ENCODE measurements at regions of chr7 and their contacts with region 1.

Region 1: GRCh38 chr7:16071246-16071857 is 350.0 kb downstream of the CRPPA start:
- DNase-seq: peak; percentile 49 to 70 (median 60)
- ATAC-seq: peak; percentile 93
- H3K4me3 ChIP-seq: no peak overlapping the region
- H3K27ac ChIP-seq: no peak overlapping the region
- H3K4me1 ChIP-seq: no peaks in the 10 kb centered on the region
- H3K27me3 ChIP-seq: no peaks in the 10 kb centered on the region
- CTCF ChIP-seq: peak; percentile 72 to 87 (median 85)
- EP300 ChIP-seq: no peak
- POLR2A ChIP-seq: no peak
- RAD21 ChIP-seq: peak; percentile 74 to 82

Region 2: DNA sequence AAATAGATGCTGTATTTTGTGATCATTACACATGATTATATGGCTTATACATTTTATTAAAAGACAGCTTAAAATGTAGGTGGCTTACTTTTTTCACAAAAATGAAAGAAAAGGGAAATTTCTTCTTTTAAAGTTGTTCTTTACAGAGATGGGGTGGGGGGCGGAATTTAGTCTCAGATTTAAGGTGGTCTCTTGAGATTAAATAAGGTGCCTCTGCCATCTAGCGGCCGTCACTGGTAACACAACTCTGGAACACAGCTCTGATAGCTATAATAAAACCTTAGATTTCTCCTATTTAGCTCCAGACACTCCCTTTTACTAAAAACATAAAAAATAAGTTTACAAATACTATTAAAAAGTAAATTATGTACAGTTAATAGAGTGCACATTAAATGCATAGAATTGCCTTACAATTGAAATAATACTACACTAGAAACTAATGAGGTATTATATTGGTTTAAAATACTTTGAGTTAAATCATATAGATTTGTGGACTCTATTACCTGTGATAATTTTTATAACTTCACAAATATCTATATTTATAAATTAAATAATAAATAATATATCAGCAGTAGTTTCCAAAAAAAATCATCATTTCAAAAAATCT is 1379.7 kb before region 1 on chr7:
- CTCF ChIA-PET with region 1: no interaction called
- POLR2A ChIA-PET with region 1: no interaction called
- in situ Hi-C with region 1: no loop called
- intact Hi-C with region 1: loop called (anchors 5 kb)
- DNase-seq: peak; percentile 7 to 57 (median 42)
- ATAC-seq: no peak
- H3K4me3 ChIP-seq: no peak overlapping the region
- H3K27ac ChIP-seq: no peak overlapping the region
- H3K4me1 ChIP-seq: no peaks in the 10 kb centered on the region
- H3K27me3 ChIP-seq: no peaks in the 10 kb centered on the region
- CTCF ChIP-seq: peak; percentile 49 to 74 (median 67)
- EP300 ChIP-seq: no peak
- POLR2A ChIP-seq: no peak
- RAD21 ChIP-seq: peak; percentile 73 to 77

Region 3: DNA sequence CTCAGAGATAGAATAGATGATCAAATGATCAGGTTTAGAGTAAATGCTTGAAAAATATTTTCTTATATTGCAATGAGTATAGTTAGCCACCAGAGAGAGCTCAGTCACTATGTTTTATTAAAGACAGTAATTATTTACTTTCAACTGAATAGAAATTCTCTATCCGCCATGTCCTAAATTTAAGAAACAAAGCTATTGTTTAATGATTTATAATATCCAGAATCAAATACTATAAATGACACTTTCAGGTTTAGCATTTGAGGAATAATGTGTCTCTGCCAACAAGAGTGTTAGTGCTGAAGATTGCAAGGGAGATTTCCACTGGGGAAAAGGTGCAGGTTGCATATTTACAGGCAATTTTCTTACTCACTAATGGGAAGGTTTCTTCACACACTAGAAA is 1353.5 kb before region 1 on chr7:
- CTCF ChIA-PET with region 1: no interaction called
- POLR2A ChIA-PET with region 1: no interaction called
- in situ Hi-C with region 1: loop called (anchors 25 kb)
- intact Hi-C with region 1: no loop called
- DNase-seq: no peak
- ATAC-seq: no peak
- H3K4me3 ChIP-seq: no peak overlapping the region
- H3K27ac ChIP-seq: no peak overlapping the region
- H3K4me1 ChIP-seq: no peaks in the 10 kb centered on the region
- H3K27me3 ChIP-seq: no peaks in the 10 kb centered on the region
- CTCF ChIP-seq: no peak
- EP300 ChIP-seq: no peak
- POLR2A ChIP-seq: no peak
- RAD21 ChIP-seq: peak; percentile 42 to 57; a peak in 3 of 4 replicates

Region 4: DNA sequence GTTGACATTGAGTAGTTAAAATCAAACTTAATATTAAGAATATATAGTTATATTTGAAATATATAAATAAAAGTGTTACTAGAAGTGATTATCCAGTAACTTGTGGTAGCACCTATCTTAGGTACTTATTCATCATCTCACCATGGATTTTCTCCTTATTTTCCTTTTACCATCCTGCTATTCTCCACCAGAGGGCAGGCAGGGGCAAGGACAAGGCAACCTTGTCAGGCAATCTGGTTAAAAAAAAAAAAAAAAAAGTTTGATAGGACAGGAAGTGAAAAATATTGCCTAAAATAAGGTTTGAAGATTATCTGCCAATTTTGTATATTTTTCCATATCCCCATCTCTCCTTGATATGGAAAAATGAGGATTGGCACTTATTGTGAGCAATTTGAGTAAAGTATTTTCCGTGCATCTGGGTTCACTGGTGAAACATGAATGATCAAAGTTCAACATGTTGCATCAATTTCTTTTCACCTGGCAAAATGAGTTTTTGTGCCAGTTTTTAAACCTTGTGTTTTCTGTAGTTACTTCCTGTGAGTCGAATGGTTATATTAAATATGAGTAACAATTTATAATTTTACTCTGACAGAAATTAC is 766.3 kb before region 1 on chr7:
- CTCF ChIA-PET with region 1: interaction called, 6 read pairs
- POLR2A ChIA-PET with region 1: no interaction called
- in situ Hi-C with region 1: loop called (anchors 25 kb)
- intact Hi-C with region 1: loop called (anchors 1 kb)
- DNase-seq: peak; percentile 4 to 34 (median 19)
- ATAC-seq: no peak
- H3K4me3 ChIP-seq: no peak overlapping the region
- H3K27ac ChIP-seq: no peak overlapping the region
- H3K4me1 ChIP-seq: no peaks in the 10 kb centered on the region
- H3K27me3 ChIP-seq: no peaks in the 10 kb centered on the region
- CTCF ChIP-seq: peak in 2 of 3 experiments; percentile 25 to 32; a peak in 2 of 6 replicates
- EP300 ChIP-seq: no peak
- POLR2A ChIP-seq: no peak
- RAD21 ChIP-seq: peak; percentile 37 to 46

Region 5: DNA sequence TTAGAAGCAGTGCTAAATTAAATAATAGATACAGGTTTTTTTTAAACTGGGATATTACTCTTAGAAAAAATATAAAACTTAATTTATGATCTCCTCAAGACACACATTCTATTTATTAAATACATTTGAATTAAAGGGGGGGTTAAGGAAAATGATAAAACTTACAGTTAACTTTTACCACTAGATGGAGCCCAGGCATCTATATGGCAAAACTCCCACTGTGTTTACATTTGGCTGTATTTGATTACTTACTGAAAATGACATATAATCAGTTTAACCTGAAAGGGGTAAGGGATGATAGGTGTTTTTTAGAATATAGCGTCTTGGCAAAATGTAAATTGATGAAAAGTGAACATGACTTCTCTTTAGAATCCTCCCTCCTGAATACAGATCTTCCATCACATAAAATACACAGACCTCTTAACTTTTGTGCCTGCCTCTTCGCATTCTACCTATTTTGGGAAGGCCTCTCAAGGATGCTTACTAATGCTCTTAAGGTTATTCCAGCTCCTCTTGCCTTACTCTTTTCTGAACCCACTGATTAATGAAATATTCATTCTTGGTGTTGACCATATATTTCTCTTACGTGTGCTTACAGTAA is 745.2 kb before region 1 on chr7:
- CTCF ChIA-PET with region 1: no interaction called
- POLR2A ChIA-PET with region 1: no interaction called
- in situ Hi-C with region 1: loop called (anchors 25 kb)
- intact Hi-C with region 1: loop called (anchors 5 kb)
- DNase-seq: peak in 2 of 4 experiments; percentile 2 to 9
- ATAC-seq: no peak
- H3K4me3 ChIP-seq: no peak overlapping the region
- H3K27ac ChIP-seq: no peak overlapping the region
- H3K4me1 ChIP-seq: no peaks in the 10 kb centered on the region
- H3K27me3 ChIP-seq: no peaks in the 10 kb centered on the region
- CTCF ChIP-seq: peak in 1 of 3 experiments; percentile 44; a peak in 1 of 6 replicates
- EP300 ChIP-seq: no peak
- POLR2A ChIP-seq: no peak
- RAD21 ChIP-seq: peak; percentile 52 to 69

Region 6: GRCh38 chr7:15628876-15629275 is 442.5 kb before region 1 on chr7:
- CTCF ChIA-PET with region 1: no interaction called
- POLR2A ChIA-PET with region 1: no interaction called
- in situ Hi-C with region 1: no loop called
- intact Hi-C with region 1: no loop called
- DNase-seq: no peak
- ATAC-seq: no peak
- H3K4me3 ChIP-seq: no peak overlapping the region
- H3K27ac ChIP-seq: no peak overlapping the region
- H3K4me1 ChIP-seq: no peaks in the 10 kb centered on the region
- H3K27me3 ChIP-seq: no peaks in the 10 kb centered on the region
- CTCF ChIP-seq: no peak
- EP300 ChIP-seq: no peak
- POLR2A ChIP-seq: no peak
- RAD21 ChIP-seq: no peak

Region 7: GRCh38 chr7:15921576-15921975 is 149.8 kb before region 1 on chr7:
- CTCF ChIA-PET with region 1: no interaction called
- POLR2A ChIA-PET with region 1: no interaction called
- in situ Hi-C with region 1: no loop called
- intact Hi-C with region 1: no loop called
- DNase-seq: no peak
- ATAC-seq: no peak
- H3K4me3 ChIP-seq: no peak overlapping the region
- H3K27ac ChIP-seq: no peak overlapping the region
- H3K4me1 ChIP-seq: no peaks in the 10 kb centered on the region
- H3K27me3 ChIP-seq: no peaks in the 10 kb centered on the region
- CTCF ChIP-seq: no peak
- EP300 ChIP-seq: no peak
- POLR2A ChIP-seq: no peak
- RAD21 ChIP-seq: no peak

Region 8: DNA sequence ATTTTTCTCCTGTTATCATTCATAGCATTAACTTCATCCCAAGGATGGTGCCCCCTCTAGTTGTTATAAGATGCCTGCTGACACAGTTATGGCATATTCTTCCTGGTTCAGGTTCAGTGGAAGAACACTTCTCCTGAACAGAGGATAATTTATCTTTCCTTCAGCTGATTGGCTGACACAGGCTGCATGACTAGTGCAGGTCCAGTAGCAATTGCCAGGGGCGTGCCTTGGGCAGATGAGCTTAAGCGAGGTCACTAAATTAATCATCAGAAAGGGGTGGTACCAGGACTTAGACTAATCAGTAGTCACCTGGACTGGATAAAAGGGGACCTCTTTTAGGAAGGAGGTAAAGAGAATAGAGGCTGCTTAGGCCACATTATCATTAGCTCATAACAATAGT is 616.9 kb after region 1 on chr7:
- CTCF ChIA-PET with region 1: no interaction called
- POLR2A ChIA-PET with region 1: no interaction called
- in situ Hi-C with region 1: no loop called
- intact Hi-C with region 1: loop called (anchors 10 kb)
- DNase-seq: peak; percentile 46 to 66 (median 56)
- ATAC-seq: peak; percentile 88
- H3K4me3 ChIP-seq: no peak overlapping the region
- H3K27ac ChIP-seq: no peak overlapping the region
- H3K4me1 ChIP-seq: no peaks in the 10 kb centered on the region
- H3K27me3 ChIP-seq: no peaks in the 10 kb centered on the region
- CTCF ChIP-seq: no peak
- EP300 ChIP-seq: no peak
- POLR2A ChIP-seq: no peak
- RAD21 ChIP-seq: no peak